ENCODE measurements at regions of chr7 and their contacts with region 1.

Region 1: GRCh38 chr7:29488977-29489376 is 74.7 kb upstream of the PRR15 start:
- DNase-seq: no peak
- H3K4me3 ChIP-seq: peak overlapping the region in 1 of 2 donors; percentile 26
- H3K27ac ChIP-seq: peak overlapping the region; percentile 68 to 80
- H3K4me1 ChIP-seq: peaks cover 0 to 9% of the 10 kb centered on the region in 2 donors
- H3K27me3 ChIP-seq: no peaks in the 10 kb centered on the region
- CTCF ChIP-seq: no peak

Region 2: GRCh38 chr7:29564496-29565223 is 75.7 kb after region 1 on chr7:
- intact Hi-C with region 1: loop called (anchors 5 kb)
- DNase-seq: peak in 1 of 2 donors; percentile 77
- H3K4me3 ChIP-seq: peak overlapping the region; percentile 73 to 77
- H3K27ac ChIP-seq: peak overlapping the region; percentile 25 to 31
- H3K4me1 ChIP-seq: peaks cover 11 to 13% of the 10 kb centered on the region in 2 donors
- H3K27me3 ChIP-seq: no peaks in the 10 kb centered on the region
- CTCF ChIP-seq: no peak